ENCODE measurements at regions of chr12 and their contacts with region 1.

Region 1: DNA sequence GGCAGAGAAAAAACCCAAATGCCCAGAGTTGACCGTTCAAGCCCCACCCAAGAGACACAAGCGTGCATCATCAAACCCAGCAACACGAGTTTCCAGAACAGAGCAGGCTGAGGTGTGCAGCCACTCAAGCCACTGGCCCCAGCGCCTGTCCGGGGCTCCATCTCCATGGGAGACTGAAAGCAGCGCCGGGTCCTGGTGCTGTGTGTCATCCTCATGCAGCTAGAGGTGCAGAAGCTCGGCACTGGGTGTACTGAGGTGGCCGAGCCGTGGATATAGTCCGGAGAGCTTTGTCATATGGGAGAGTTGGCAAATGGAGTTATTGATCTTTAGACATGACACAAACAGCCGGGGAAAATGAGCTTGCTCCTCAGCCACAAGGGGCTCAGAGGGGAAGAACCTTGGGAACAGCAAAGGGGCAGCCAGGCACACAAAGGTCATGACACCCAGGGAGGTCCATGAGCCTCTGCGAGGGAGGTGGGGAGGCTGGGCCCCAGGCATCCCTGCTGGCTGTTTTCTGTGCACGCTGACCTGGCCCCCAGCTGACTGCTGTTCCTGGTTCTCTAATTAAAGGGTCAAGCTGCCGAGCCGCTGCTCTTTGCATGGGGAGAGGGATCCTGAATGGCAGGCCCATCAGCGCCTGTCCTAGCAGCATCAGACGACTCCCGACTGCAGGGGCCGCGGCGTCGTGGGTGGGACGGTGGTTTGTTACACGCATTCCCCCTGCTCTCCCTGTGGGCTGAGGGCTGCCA is 145.4 kb upstream of the SFSWAP start:
- DNase-seq: no peak
- ATAC-seq: no peak
- H3K4me3 ChIP-seq: no peak overlapping the region
- H3K4me3 Mint-ChIP-seq: no peak overlapping the region
- H3K27ac ChIP-seq: no peak overlapping the region
- H3K27ac Mint-ChIP-seq: no peak overlapping the region
- H3K4me1 ChIP-seq: no peaks in the 10 kb centered on the region
- H3K4me1 Mint-ChIP-seq: no peaks in the 10 kb centered on the region
- H3K27me3 ChIP-seq: no peaks in the 10 kb centered on the region
- H3K27me3 Mint-ChIP-seq: peaks cover 3 to 17% of the 10 kb centered on the region in 2 donors
- CTCF ChIP-seq: no peak

Region 2: DNA sequence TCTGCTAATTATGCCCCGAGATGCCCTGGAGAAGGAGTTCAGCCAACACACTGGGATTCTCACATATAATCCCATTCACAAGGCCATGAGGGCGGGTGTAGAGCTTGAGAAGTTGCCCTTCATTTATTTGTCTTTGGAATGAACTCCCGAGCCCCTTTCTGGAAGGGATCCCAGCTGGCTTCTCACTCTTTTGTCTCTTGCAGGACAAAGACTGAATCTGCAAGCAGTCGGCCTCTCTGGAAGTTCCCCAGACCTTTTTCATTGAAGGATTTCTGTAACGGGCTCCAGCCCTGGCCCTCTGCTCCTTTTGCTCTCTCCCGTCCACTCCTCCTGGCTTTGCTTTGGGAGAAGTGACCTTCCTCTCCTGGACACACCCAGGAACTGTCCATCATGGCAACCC is 17.9 kb before region 1 on chr12:
- intact Hi-C with region 1: loop called (anchors 2 kb)
- DNase-seq: no peak
- ATAC-seq: no peak
- H3K4me3 ChIP-seq: no peak overlapping the region
- H3K4me3 Mint-ChIP-seq: no peak overlapping the region
- H3K27ac ChIP-seq: no peak overlapping the region
- H3K27ac Mint-ChIP-seq: no peak overlapping the region
- H3K4me1 ChIP-seq: no peaks in the 10 kb centered on the region
- H3K4me1 Mint-ChIP-seq: no peaks in the 10 kb centered on the region
- H3K27me3 ChIP-seq: no peaks in the 10 kb centered on the region
- H3K27me3 Mint-ChIP-seq: peaks cover 8 to 10% of the 10 kb centered on the region in 2 donors
- CTCF ChIP-seq: no peak

Region 3: GRCh38 chr12:131640525-131640924 is 75.1 kb after region 1 on chr12:
- intact Hi-C with region 1: no loop called
- DNase-seq: no peak
- ATAC-seq: no peak
- H3K4me3 ChIP-seq: no peak overlapping the region
- H3K4me3 Mint-ChIP-seq: no peak overlapping the region
- H3K27ac ChIP-seq: no peak overlapping the region
- H3K27ac Mint-ChIP-seq: no peak overlapping the region
- H3K4me1 ChIP-seq: no peaks in the 10 kb centered on the region
- H3K4me1 Mint-ChIP-seq: peaks cover 0 to 7% of the 10 kb centered on the region in 2 donors
- H3K27me3 ChIP-seq: no peaks in the 10 kb centered on the region
- H3K27me3 Mint-ChIP-seq: peaks cover 0 to 12% of the 10 kb centered on the region in 2 donors
- CTCF ChIP-seq: no peak

Measured in natural killer cell (primary cell).